Naive thymus-derived CD4-positive, alpha-beta T cell (primary cell): ENCODE measurements at regions of chr1 and their contacts with region 1.

Region 1: DNA sequence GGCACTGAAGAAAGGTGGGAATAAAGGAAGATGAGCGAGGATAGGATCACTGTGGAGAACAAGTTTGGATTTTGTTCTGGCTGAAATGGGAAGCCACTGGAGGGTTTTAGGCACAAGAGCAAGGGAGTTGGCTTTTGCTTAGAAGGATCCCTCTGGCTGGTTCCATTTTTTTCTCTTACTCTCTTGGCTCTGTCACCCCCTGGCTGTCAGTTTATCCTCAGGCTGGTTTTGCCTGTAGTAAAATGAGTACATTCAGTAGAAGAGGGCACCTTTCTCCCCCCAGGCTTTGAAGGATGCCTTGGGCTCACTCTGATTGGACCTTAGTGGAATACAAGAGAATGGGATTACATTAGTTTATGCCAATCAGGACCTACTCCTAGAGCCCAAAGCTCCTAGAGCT is 17.1 kb downstream of the CACHD1 start:
- DNase-seq: no peak
- ATAC-seq: no peak
- H3K4me3 ChIP-seq: no peak overlapping the region
- H3K4me3 Mint-ChIP-seq: peak overlapping the region in 2 of 10 donors; percentile 10 to 57
- H3K27ac ChIP-seq: no peak overlapping the region
- H3K27ac Mint-ChIP-seq: peak overlapping the region in 1 of 9 donors; percentile 58
- H3K4me1 ChIP-seq: no peaks in the 10 kb centered on the region
- H3K4me1 Mint-ChIP-seq: peaks cover 0 to 59% (median 12%) of the 10 kb centered on the region in 7 donors
- H3K27me3 ChIP-seq: no peaks in the 10 kb centered on the region
- H3K27me3 Mint-ChIP-seq: peaks cover 5 to 19% (median 8%) of the 10 kb centered on the region in 5 donors

Region 2: GRCh38 chr1:64268653-64269557 is 218.2 kb before region 1 on chr1:
- CTCF ChIA-PET with region 1: no interaction called
- POLR2A ChIA-PET with region 1: no interaction called
- intact Hi-C with region 1: loop called in 1 of 2 experiments (anchors 1 kb)
- DNase-seq: peak; percentile 30 to 74 (median 62)
- ATAC-seq: peak; percentile 75
- H3K4me3 ChIP-seq: no peak overlapping the region
- H3K4me3 Mint-ChIP-seq: no peak overlapping the region
- H3K27ac ChIP-seq: no peak overlapping the region
- H3K27ac Mint-ChIP-seq: no peak overlapping the region
- H3K4me1 ChIP-seq: no peaks in the 10 kb centered on the region
- H3K4me1 Mint-ChIP-seq: no peaks in the 10 kb centered on the region
- H3K27me3 ChIP-seq: no peaks in the 10 kb centered on the region
- H3K27me3 Mint-ChIP-seq: peaks cover 3 to 18% (median 10%) of the 10 kb centered on the region in 5 donors